ENCODE measurements at regions of chr17 and their contacts with region 1.

Region 1: GRCh38 chr17:81484195-81484979 is 28.2 kb downstream of the ACTG1 start:
- DNase-seq: peak; percentile 86
- H3K4me3 ChIP-seq: peak overlapping the region; percentile 26
- H3K27ac ChIP-seq: no peak overlapping the region
- H3K4me1 ChIP-seq: peaks cover 16% of the 10 kb centered on the region
- H3K27me3 ChIP-seq: peaks cover 4% of the 10 kb centered on the region
- CTCF ChIP-seq: peak; percentile 99

Region 2: DNA sequence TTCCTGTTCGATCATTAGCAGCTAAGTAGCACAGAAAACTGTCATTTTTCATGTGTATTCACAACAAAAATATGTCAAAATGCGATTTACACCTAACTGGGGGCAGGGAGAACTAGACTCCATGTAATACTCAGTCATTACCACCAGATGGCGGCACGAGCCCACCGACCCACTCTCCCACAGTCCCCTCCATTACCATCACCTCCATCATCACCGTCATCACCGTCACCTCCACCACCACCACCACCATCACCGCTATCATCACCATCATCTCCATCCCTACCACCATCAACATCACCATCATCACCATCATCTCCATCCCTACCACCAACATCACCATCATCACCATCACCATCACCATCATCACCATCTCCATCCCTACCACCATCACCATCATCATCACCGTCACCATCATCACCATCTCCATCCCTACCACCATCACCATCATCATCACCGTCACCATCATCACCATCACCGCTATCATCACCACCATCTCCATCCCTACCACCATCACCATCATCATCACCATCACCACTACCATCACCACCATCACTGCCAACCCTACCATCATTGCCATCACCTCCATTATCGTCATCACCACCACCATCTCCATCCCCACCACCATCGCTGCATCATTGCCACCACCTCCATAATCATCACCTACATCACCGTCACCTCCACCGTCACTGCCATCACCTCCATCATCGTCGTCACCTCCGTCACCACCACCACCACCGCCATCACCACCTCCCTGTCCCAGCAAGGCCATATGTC is 230.8 kb before region 1 on chr17:
- intact Hi-C with region 1: loop called (anchors 2 kb)
- DNase-seq: peak; percentile 55
- H3K4me3 ChIP-seq: no peak overlapping the region
- H3K27ac ChIP-seq: no peak overlapping the region
- H3K4me1 ChIP-seq: peaks cover 41% of the 10 kb centered on the region
- H3K27me3 ChIP-seq: no peaks in the 10 kb centered on the region
- CTCF ChIP-seq: peak; percentile 70

Region 3: GRCh38 chr17:81294856-81295680 is 189.3 kb before region 1 on chr17 and contains the start of gene SLC38A10:
- intact Hi-C with region 1: loop called (anchors 5 kb)
- DNase-seq: peak; percentile 96
- H3K4me3 ChIP-seq: peak within 1 kb of the TSS; percentile 77
- H3K27ac ChIP-seq: peak within 1 kb of the TSS; percentile 90
- H3K4me1 ChIP-seq: peaks cover 4% of the 10 kb centered on the region
- H3K27me3 ChIP-seq: no peaks in the 10 kb centered on the region
- CTCF ChIP-seq: no peak
- total RNA-seq, gene SLC38A10: 67.5 to 139 TPM

Region 4: GRCh38 chr17:81401723-81402529 is 82.5 kb before region 1 on chr17:
- intact Hi-C with region 1: loop called (anchors 5 kb)
- DNase-seq: peak; percentile 62
- H3K4me3 ChIP-seq: no peak overlapping the region
- H3K27ac ChIP-seq: peak overlapping the region; percentile 88
- H3K4me1 ChIP-seq: peaks cover 27% of the 10 kb centered on the region
- H3K27me3 ChIP-seq: no peaks in the 10 kb centered on the region
- CTCF ChIP-seq: peak; percentile 15

Measured in colonic mucosa (tissue), 4 donors.